Naive thymus-derived CD4-positive, alpha-beta T cell (primary cell): ENCODE measurements at regions of chr14 and their contacts with region 1.

Region 1: GRCh38 chr14:95527387-95528002 is 7.4 kb upstream of the GLRX5 start:
- DNase-seq: peak in 7 of 9 donors; percentile 31 to 60 (median 54)
- ATAC-seq: peak; percentile 50
- H3K4me3 ChIP-seq: no peak overlapping the region
- H3K4me3 Mint-ChIP-seq: peak overlapping the region in 6 of 10 donors; percentile 1 to 54 (median 22)
- H3K27ac ChIP-seq: peak overlapping the region; percentile 49
- H3K27ac Mint-ChIP-seq: peak overlapping the region; percentile 14 to 97 (median 89)
- H3K4me1 ChIP-seq: peaks cover 25 to 39% of the 10 kb centered on the region in 2 donors
- H3K4me1 Mint-ChIP-seq: peaks cover 39 to 80% (median 77%) of the 10 kb centered on the region in 7 donors
- H3K27me3 ChIP-seq: no peaks in the 10 kb centered on the region
- H3K27me3 Mint-ChIP-seq: no peaks in the 10 kb centered on the region

Region 2: DNA sequence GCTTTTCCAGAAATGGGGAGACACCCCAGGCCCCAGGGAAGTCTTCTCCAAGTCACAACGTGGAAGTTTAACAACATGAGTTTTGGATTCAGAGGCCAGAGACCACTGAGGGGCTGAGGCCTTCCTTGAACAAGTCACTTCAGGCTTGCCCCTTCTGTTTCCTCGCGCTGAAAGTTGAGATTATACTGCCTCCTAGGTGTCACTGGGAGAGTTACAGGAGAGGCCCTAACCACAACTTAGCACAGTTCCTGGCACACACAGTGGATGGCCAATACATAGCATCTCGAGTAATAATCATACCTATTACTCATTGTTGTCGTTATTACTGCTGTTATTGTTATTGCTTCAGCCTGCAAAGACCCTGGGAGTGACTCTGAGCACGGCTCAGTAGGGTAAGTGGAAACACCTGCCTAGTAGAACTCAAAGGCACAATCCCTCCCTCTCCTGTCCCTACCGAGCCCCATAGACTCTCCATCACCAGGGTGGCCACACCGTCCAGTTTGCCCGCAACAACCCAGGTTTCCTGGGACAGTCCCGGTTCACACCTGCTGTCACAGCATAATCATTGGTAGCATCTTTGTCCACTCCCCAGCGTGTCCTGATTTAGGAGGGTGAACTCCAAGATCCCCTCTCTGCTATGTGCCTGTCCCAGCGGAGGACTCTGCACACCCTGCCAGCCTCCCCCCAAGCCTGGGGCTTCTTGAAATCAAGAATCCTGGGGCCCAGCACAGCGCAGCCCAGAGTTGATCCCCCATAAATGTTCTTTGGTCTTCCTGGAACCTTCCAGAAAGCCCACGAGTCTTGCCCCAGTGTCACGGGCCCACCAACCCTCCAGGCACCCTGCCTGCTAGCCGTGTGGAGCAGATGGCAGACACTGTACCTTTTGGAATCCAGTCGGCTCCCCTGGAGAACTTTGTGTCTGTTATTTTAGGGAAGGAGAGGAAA is 96.0 kb before region 1 on chr14:
- CTCF ChIA-PET with region 1: interaction called, 209 read pairs
- POLR2A ChIA-PET with region 1: no interaction called
- intact Hi-C with region 1: loop called (anchors 1 kb)
- DNase-seq: peak in 1 of 9 donors; percentile 8
- ATAC-seq: peak; percentile 57
- H3K4me3 ChIP-seq: no peak overlapping the region
- H3K4me3 Mint-ChIP-seq: no peak overlapping the region
- H3K27ac ChIP-seq: no peak overlapping the region
- H3K27ac Mint-ChIP-seq: peak overlapping the region in 1 of 9 donors; percentile 32
- H3K4me1 ChIP-seq: no peaks in the 10 kb centered on the region
- H3K4me1 Mint-ChIP-seq: peaks cover 0 to 6% (median 0%) of the 10 kb centered on the region in 7 donors
- H3K27me3 ChIP-seq: no peaks in the 10 kb centered on the region
- H3K27me3 Mint-ChIP-seq: no peaks in the 10 kb centered on the region

Region 3: GRCh38 chr14:95452176-95452892 is 75.2 kb before region 1 on chr14:
- CTCF ChIA-PET with region 1: interaction called, 18 read pairs
- POLR2A ChIA-PET with region 1: interaction called, 255 read pairs
- intact Hi-C with region 1: no loop called
- DNase-seq: peak in 2 of 9 donors; percentile 14 to 18
- ATAC-seq: peak; percentile 38
- H3K4me3 ChIP-seq: no peak overlapping the region
- H3K4me3 Mint-ChIP-seq: no peak overlapping the region
- H3K27ac ChIP-seq: no peak overlapping the region
- H3K27ac Mint-ChIP-seq: peak overlapping the region in 1 of 9 donors; percentile 14
- H3K4me1 ChIP-seq: no peaks in the 10 kb centered on the region
- H3K4me1 Mint-ChIP-seq: peaks cover 0 to 6% (median 4%) of the 10 kb centered on the region in 7 donors
- H3K27me3 ChIP-seq: no peaks in the 10 kb centered on the region
- H3K27me3 Mint-ChIP-seq: no peaks in the 10 kb centered on the region

Region 4: DNA sequence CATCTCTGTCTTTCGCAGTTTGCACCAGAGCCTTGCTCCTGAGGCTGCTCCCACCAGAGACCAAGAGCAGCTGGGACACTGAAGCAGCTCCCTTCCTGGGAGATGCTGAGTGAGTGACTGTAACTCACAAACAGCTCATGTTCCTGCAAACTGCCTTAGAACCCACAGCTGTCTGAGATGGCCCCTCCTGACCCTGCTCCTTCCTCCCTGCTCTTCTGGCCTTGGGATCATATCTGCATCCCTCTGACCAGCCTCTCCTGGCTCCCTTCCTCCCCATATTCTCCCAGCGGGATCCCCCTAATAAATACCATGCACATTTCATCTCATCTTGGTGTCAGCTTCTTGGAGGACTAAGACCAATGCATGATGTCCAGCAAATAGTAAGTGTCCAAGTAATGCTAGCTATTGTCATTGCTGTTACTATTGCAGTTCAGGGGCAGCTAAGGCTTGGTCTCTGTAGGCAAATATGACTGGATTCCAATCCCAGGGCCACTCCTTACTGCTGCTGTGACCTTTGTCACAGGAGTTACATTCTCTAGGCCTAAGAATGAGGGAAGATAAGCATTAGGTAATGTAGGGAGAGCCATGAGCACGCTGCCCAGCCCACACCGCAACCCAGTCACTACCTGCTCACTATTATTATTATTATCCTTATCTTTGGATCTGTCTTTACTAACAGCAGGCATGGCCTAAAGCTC is 58.9 kb before region 1 on chr14:
- CTCF ChIA-PET with region 1: interaction called, 21 read pairs
- POLR2A ChIA-PET with region 1: interaction called, 255 read pairs
- intact Hi-C with region 1: loop called (anchors 1 to 5 kb)
- DNase-seq: no peak
- ATAC-seq: no peak
- H3K4me3 ChIP-seq: no peak overlapping the region
- H3K4me3 Mint-ChIP-seq: peak overlapping the region in 1 of 10 donors; percentile 56
- H3K27ac ChIP-seq: peak overlapping the region; percentile 85
- H3K27ac Mint-ChIP-seq: peak overlapping the region in 8 of 9 donors; percentile 82 to 100 (median 97)
- H3K4me1 ChIP-seq: peaks cover 23 to 45% of the 10 kb centered on the region in 2 donors
- H3K4me1 Mint-ChIP-seq: peaks cover 31 to 74% (median 59%) of the 10 kb centered on the region in 7 donors
- H3K27me3 ChIP-seq: no peaks in the 10 kb centered on the region
- H3K27me3 Mint-ChIP-seq: no peaks in the 10 kb centered on the region

Region 5: DNA sequence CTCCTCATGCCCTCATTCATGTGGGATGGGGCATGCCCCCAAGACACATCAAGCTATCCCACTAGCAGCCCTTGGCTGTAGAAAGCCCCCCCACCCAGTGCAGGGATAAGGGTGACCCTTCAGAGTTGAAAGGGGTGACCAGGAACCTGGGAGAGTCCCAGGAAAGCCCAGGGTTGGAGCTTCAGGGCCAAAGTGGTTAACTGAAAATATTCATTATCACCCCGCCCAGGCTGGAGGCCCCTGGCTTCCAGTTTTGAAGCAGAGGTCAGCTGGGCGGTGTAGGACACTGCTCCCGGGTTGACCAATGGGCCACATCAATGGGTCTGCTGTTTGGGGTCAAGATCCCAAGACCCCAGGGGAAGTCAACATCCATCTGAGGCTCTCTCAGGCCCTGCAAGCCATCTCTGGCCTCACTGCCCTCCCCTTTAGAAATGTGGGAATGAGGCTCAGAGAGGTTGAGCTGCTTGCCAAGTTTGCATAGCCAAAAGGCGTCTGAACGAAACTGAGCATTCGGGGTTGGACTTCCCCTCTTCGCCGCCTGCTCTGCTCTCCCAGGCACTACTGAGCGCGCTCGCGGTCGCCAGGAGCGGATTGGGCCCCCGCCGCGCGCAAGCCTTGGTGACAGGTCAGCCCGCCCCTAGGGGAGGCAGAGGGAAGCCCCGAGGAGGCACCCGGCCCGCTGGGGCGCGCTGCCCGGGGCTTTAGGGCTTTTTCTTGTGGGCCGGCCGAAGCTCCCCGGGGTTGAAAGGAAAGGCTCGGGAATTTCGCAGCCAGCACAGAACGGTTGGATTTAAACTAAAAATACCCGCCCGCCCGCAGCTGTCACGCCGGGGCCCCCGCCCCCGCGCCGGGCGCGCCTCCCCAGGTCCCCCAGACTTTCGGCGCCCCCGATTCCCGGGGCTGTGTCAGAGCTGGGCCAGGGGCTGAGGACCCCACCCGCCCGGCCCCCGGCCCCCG is 11.6 kb before region 1 on chr14:
- CTCF ChIA-PET with region 1: interaction called, 16 read pairs
- POLR2A ChIA-PET with region 1: interaction called, 22 read pairs
- intact Hi-C with region 1: loop called (anchors 1 kb)
- DNase-seq: peak; percentile 62 to 89 (median 74)
- ATAC-seq: peak; percentile 93
- H3K4me3 ChIP-seq: peak overlapping the region; percentile 99
- H3K4me3 Mint-ChIP-seq: peak overlapping the region; percentile 87 to 98 (median 92)
- H3K27ac ChIP-seq: peak overlapping the region; percentile 80
- H3K27ac Mint-ChIP-seq: peak overlapping the region; percentile 63 to 94 (median 90)
- H3K4me1 ChIP-seq: peaks cover 57 to 61% of the 10 kb centered on the region in 2 donors
- H3K4me1 Mint-ChIP-seq: peaks cover 59 to 79% (median 72%) of the 10 kb centered on the region in 7 donors
- H3K27me3 ChIP-seq: no peaks in the 10 kb centered on the region
- H3K27me3 Mint-ChIP-seq: no peaks in the 10 kb centered on the region